Activated CD8-positive, alpha-beta memory T cell treated with anti-CD3 and anti-CD28 coated beads, Interleukin-2, amount 10 ng/mL, durations not matched to agents 7 days and 5 days (primary cell): ENCODE measurements at regions of chr17 and their contacts with region 1.

Region 1: DNA sequence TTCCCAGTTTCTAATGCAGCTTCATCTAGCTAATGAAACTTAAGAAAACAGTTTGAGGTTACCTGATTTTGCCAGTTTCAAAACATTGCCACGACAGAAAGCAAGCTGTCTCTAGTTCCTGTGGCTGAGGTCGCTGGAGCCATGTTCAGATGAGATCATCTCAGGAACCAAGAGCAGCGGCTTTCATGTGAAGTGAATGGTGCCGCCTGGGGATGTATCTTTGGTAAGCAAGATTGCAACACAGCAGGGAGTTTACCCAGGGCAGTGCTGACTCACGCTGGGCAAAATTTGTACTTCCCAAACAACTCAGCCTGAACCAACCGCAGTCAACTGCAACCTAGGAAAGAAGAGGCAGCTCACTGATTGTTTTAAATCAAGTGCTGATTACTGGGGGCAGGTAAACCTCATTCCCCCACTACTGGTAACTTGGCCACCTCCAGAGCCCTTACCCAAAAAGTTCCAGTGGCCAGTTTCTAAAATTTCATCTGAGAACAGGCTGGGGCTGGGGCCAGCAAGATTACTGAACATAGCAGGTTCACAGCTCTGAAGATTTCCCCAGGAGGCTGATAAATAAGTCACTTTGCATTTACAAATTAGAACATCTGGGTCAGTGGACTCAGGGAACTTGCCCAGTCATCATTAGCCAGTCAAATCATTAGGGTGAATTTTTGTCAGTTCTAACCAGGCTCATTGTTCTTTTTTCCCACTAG is at the start of gene RFFL:
- DNase-seq: peak; percentile 96
- ATAC-seq: peak; percentile 96
- H3K4me3 Mint-ChIP-seq: peak within 1 kb of the TSS; percentile 54
- H3K27ac Mint-ChIP-seq: peak within 1 kb of the TSS; percentile 91
- H3K4me1 Mint-ChIP-seq: peaks cover 62% of the 10 kb centered on the region
- H3K27me3 Mint-ChIP-seq: no peaks in the 10 kb centered on the region
- total RNA-seq, gene RFFL: 47.7 to 52.2 TPM

Region 2: GRCh38 chr17:34990921-34991365 is 72.7 kb before region 1 on chr17:
- CTCF ChIA-PET with region 1: interaction called, 15 read pairs
- DNase-seq: peak; percentile 56
- ATAC-seq: peak; percentile 74
- H3K4me3 Mint-ChIP-seq: peak overlapping the region; percentile 23
- H3K27ac Mint-ChIP-seq: peak overlapping the region; percentile 97
- H3K4me1 Mint-ChIP-seq: peaks cover 63% of the 10 kb centered on the region
- H3K27me3 Mint-ChIP-seq: no peaks in the 10 kb centered on the region

Region 3: GRCh38 chr17:35038453-35038852 is 25.2 kb before region 1 on chr17:
- CTCF ChIA-PET with region 1: no interaction called
- DNase-seq: no peak
- ATAC-seq: no peak
- H3K4me3 Mint-ChIP-seq: no peak overlapping the region
- H3K27ac Mint-ChIP-seq: no peak overlapping the region
- H3K4me1 Mint-ChIP-seq: peaks cover 7% of the 10 kb centered on the region
- H3K27me3 Mint-ChIP-seq: no peaks in the 10 kb centered on the region

Region 4: DNA sequence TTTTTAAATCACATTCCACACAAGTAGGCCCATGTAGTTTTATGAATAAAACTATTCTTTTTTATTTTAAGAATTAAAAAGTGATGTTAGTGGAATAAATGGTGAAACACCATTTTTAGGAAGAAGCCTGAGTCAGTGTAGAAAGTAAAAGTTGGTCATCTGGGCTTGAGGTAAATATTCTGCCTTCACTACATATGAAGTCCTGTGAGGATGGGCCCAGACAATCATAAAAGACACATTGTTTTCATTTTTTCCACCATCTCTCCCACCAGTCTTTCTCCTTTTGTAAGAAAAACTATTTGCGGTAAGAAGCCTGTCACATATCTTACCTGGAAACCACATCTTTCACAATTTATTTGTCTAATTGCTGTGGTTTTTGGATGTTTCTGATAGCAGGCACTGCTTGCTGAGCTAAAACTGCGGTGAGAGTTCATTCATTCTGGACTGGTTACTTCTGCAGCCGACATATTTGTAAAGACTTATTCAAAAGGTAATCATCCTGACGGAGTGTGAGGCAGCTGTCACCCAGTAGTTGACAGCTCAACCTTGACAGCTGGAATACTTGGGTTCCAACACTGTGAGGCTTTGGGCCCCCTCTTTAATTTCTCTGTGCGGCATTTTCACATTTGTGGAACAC is 10.4 kb after region 1 on chr17:
- CTCF ChIA-PET with region 1: interaction called, 46 read pairs
- DNase-seq: no peak
- ATAC-seq: peak; percentile 28
- H3K4me3 Mint-ChIP-seq: peak overlapping the region; percentile 31
- H3K27ac Mint-ChIP-seq: peak overlapping the region; percentile 80
- H3K4me1 Mint-ChIP-seq: peaks cover 68% of the 10 kb centered on the region
- H3K27me3 Mint-ChIP-seq: no peaks in the 10 kb centered on the region

Region 5: DNA sequence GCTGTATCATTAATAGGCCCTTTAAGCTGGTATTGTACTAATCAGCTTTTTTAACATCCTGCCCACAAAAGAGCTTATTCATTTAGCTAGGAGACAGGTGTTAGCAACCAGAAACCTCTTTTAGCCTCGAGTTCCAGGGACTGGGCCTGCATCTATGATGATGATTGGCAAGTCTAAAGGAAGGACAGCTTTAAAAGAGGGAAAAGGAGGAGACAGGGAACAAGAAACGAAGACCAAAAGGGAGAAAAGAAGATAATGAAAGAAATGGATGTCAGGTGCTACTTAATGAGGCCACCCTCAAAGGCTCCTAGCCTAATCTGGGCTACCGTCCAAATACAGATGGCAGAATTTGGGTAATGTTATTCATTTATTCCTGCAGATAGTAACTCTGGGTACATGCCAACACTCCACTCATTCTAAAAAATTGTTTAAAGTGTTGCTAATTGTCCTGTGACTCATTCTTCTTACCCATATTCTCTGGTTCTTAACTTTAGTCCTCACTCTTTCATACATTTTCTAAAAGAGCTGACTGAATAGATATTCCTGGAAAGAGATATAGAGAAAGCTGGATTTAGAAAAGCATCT is 18.5 kb after region 1 on chr17:
- CTCF ChIA-PET with region 1: interaction called, 46 read pairs
- DNase-seq: no peak
- ATAC-seq: peak; percentile 66
- H3K4me3 Mint-ChIP-seq: peak overlapping the region; percentile 54
- H3K27ac Mint-ChIP-seq: peak overlapping the region; percentile 92
- H3K4me1 Mint-ChIP-seq: peaks cover 85% of the 10 kb centered on the region
- H3K27me3 Mint-ChIP-seq: no peaks in the 10 kb centered on the region

Region 6: GRCh38 chr17:35127751-35128514 is 64.3 kb after region 1 on chr17:
- CTCF ChIA-PET with region 1: no interaction called
- DNase-seq: no peak
- ATAC-seq: no peak
- H3K4me3 Mint-ChIP-seq: no peak overlapping the region
- H3K27ac Mint-ChIP-seq: no peak overlapping the region
- H3K4me1 Mint-ChIP-seq: no peaks in the 10 kb centered on the region
- H3K27me3 Mint-ChIP-seq: no peaks in the 10 kb centered on the region